ENCODE measurements at regions of chr12 and their contacts with region 1.

Region 1: GRCh38 chr12:118979763-118980406 is 1.5 kb upstream of the SRRM4 start:
- DNase-seq: peak; percentile 24
- H3K4me3 ChIP-seq: no peak overlapping the region
- H3K27ac ChIP-seq: no peak overlapping the region
- H3K4me1 ChIP-seq: peaks cover 0 to 6% (median under 1%) of the 10 kb centered on the region in 4 donors
- H3K27me3 ChIP-seq: peaks cover 52% of the 10 kb centered on the region
- CTCF ChIP-seq: peak; percentile 44 to 70 (median 53)
- EP300 ChIP-seq: no peak
- POLR2A ChIP-seq: no peak

Region 2: DNA sequence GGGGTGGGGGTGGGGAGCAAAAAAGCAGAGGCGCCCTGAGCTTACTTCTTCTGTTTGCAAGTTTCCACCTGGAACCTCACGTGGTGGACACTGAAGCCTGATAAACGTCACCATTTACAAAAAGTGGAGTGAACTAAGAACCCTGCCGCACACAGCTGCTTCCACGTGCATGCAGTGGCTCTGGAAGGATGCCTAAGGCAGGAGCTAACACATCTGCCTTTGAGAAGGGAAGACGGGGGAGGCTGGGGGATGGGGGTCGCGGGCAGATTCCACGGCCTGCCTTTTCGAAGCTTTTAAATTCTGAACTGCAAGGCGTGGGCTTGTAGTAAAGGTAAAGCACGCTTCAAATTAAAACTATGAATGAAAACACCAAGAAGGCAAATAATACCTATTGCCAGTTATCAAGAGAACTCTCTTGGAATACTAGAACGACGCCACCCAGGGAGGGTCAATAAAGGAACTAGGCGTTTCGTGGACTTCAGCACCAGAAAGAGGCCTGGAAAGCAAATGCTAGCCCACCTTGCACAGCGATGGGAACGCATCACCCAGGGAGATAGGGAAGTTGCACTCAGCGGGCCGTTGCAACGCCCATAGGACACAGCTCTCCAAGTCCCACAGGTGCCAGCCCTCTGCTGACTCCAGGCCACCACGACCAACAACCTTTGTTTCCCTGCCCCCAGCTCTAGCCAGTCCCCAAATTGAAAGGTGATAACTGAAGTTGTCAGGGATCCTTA is 1942.4 kb before region 1 on chr12:
- in situ Hi-C with region 1: no loop called
- intact Hi-C with region 1: loop called (anchors 5 kb)
- DNase-seq: no peak
- H3K4me3 ChIP-seq: no peak overlapping the region
- H3K27ac ChIP-seq: no peak overlapping the region
- H3K4me1 ChIP-seq: peaks cover 0 to 10% (median 5%) of the 10 kb centered on the region in 4 donors
- H3K27me3 ChIP-seq: peaks cover 26% of the 10 kb centered on the region
- CTCF ChIP-seq: no peak
- EP300 ChIP-seq: no peak
- POLR2A ChIP-seq: no peak

Region 3: DNA sequence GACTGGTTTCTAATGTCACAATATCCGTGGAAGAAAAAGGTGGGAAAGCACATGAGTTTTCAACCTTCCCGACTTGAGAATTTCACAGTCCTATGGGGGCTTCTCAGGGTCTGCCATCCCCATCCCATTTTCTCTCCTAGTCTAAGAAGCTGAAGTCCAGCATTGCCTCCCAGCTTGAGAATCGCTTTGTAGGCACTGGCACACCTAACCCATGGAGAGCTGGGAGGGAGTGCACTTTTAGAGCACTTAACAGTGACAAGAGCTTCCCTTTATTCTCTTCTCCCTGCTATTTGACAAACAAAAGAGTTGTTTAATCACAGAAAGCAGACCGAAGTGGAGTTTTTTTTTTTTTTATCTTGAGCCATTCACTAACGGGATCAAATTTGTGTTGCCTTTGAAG is 21.4 kb before region 1 on chr12:
- in situ Hi-C with region 1: no loop called
- intact Hi-C with region 1: no loop called
- DNase-seq: no peak
- H3K4me3 ChIP-seq: no peak overlapping the region
- H3K27ac ChIP-seq: no peak overlapping the region
- H3K4me1 ChIP-seq: no peaks in the 10 kb centered on the region
- H3K27me3 ChIP-seq: no peaks in the 10 kb centered on the region
- CTCF ChIP-seq: no peak
- EP300 ChIP-seq: no peak
- POLR2A ChIP-seq: no peak

Region 4: GRCh38 chr12:119544765-119545625 is 565.1 kb after region 1 on chr12:
- in situ Hi-C with region 1: loop called in 1 of 4 experiments (anchors 25 kb)
- intact Hi-C with region 1: loop called (anchors 10 kb)
- DNase-seq: peak; percentile 50
- H3K4me3 ChIP-seq: no peak overlapping the region
- H3K27ac ChIP-seq: no peak overlapping the region
- H3K4me1 ChIP-seq: no peaks in the 10 kb centered on the region
- H3K27me3 ChIP-seq: peaks cover 3% of the 10 kb centered on the region
- CTCF ChIP-seq: peak; percentile 72 to 83 (median 77)
- EP300 ChIP-seq: no peak
- POLR2A ChIP-seq: no peak